Dendritic cell treated with granulocyte-macrophage colony-stimulating factor and Interleukin-4, amounts not matched to agents 40 ng/mL and 50 ng/mL, for 4 days (primary cell): ENCODE measurements at regions of chr15 and their contacts with region 1.

Region 1: GRCh38 chr15:40338041-40338657 is 2.6 kb downstream of the CCDC9B start:
- H3K4me3 Mint-ChIP-seq: no peak overlapping the region
- H3K27ac Mint-ChIP-seq: peak overlapping the region; percentile 100
- H3K4me1 Mint-ChIP-seq: peaks cover 90% of the 10 kb centered on the region
- H3K27me3 Mint-ChIP-seq: no peaks in the 10 kb centered on the region

Region 2: GRCh38 chr15:40285151-40285550 is 53.0 kb before region 1 on chr15:
- intact Hi-C with region 1: loop called (anchors 2 kb)
- H3K4me3 Mint-ChIP-seq: peak overlapping the region; percentile 45
- H3K27ac Mint-ChIP-seq: peak overlapping the region; percentile 91
- H3K4me1 Mint-ChIP-seq: peaks cover 74% of the 10 kb centered on the region
- H3K27me3 Mint-ChIP-seq: peaks cover 29% of the 10 kb centered on the region

Region 3: GRCh38 chr15:40307421-40308211 is 30.5 kb before region 1 on chr15 and contains the start of gene PLCB2:
- intact Hi-C with region 1: loop called (anchors 1 kb)
- H3K4me3 Mint-ChIP-seq: peak within 1 kb of the TSS; percentile 99
- H3K27ac Mint-ChIP-seq: peak within 1 kb of the TSS; percentile 91
- H3K4me1 Mint-ChIP-seq: peaks cover 67% of the 10 kb centered on the region
- H3K27me3 Mint-ChIP-seq: peaks cover 8% of the 10 kb centered on the region

Region 4: GRCh38 chr15:40323239-40323952 is 14.8 kb before region 1 on chr15 and contains the start of gene INAFM2:
- intact Hi-C with region 1: loop called (anchors 1 kb)
- H3K4me3 Mint-ChIP-seq: peak within 1 kb of the TSS; percentile 82
- H3K27ac Mint-ChIP-seq: peak within 1 kb of the TSS; percentile 85
- H3K4me1 Mint-ChIP-seq: peaks cover 69% of the 10 kb centered on the region
- H3K27me3 Mint-ChIP-seq: no peaks in the 10 kb centered on the region

Region 5: GRCh38 chr15:40398413-40398873 is 60.3 kb after region 1 on chr15:
- intact Hi-C with region 1: no loop called
- H3K4me3 Mint-ChIP-seq: no peak overlapping the region
- H3K27ac Mint-ChIP-seq: no peak overlapping the region
- H3K4me1 Mint-ChIP-seq: peaks cover 34% of the 10 kb centered on the region
- H3K27me3 Mint-ChIP-seq: no peaks in the 10 kb centered on the region